Calu3 (cell line): ENCODE measurements at regions of chr12 and their contacts with region 1.

Region 1: DNA sequence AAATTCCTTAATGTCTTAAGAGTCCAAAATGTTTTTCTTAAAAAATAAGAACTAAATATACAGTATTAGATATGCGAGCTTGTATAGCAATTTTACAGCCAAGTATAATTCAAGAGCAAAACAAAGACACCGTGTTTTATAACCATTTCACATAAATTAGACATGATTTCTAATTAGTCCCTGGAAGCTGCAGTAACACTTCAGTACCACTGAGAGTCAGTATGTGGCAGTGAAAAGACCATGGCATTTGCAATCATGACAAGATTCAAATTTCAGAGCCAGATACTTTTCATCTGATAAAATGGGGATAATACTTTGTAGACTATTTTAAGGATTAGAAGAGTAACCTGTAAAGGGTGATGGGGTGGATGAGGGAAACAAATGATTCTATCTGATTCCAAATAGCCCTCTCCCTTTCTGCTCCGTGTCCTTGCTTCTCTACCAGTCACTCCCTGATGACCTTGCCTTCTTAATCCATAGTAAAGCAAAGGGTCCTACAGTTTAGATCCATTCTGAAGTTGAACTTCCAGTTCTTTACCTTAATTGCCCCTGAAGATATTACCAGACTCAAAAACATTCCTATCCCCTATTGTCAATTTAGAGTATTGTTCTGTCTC is 145.4 kb upstream of the ABCD2 start:
- DNase-seq: peak; percentile 3
- H3K4me3 Mint-ChIP-seq: no peak overlapping the region
- H3K27ac Mint-ChIP-seq: no peak overlapping the region
- H3K4me1 Mint-ChIP-seq: no peaks in the 10 kb centered on the region
- H3K27me3 Mint-ChIP-seq: no peaks in the 10 kb centered on the region
- CTCF ChIP-seq: peak; percentile 36

Region 2: GRCh38 chr12:39237004-39237403 is 528.0 kb before region 1 on chr12:
- CTCF ChIA-PET with region 1: no interaction called
- intact Hi-C with region 1: no loop called
- DNase-seq: no peak
- H3K4me3 Mint-ChIP-seq: no peak overlapping the region
- H3K27ac Mint-ChIP-seq: no peak overlapping the region
- H3K4me1 Mint-ChIP-seq: peaks cover 16% of the 10 kb centered on the region
- H3K27me3 Mint-ChIP-seq: no peaks in the 10 kb centered on the region
- CTCF ChIP-seq: no peak

Region 3: DNA sequence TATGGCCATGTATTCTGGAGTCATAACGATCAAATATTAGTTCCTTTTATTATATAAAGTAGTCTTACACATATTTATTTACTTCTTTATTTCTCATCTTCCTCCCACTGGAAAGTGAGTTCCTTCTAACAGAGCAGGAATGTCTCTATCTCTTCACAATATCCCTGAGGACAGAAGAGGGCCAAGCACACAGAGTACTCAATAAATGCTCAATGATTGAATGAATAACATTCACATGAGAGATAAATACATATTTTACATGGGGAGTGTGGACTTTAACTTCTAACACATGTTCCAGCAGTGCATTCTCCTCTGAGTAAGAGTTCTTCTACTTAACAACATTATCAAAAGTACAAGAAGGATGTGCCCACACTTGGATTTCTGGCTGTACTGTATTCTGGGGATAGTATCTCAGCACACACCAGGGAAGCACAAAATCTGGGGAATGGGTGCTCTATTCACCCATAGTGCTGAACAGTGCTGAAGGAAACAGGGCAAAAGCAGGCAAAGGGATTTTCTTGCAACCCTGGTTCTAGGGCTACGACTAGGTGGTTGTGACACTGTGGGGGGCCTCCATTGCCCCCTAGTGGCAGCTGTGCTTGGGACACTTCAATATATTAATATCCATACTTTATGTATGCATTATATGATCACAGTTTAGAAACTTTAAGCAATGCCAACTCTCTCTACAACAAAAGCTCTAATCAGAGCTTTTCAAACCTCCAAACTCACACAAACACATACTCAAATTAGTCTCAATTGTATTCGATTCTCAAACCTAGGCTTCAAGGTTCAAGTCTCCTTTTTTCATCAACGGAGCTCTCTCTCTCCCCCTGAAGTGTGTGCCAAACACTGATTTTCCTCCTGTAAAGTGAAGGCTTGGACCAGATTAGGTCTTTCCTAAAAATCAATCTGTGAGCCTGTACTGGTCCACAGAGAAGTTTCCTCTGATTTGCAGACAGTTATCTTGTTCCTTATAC is 225.4 kb after region 1 on chr12:
- CTCF ChIA-PET with region 1: interaction called, 4 read pairs
- intact Hi-C with region 1: loop called (anchors 1 kb)
- DNase-seq: peak; percentile 60
- H3K4me3 Mint-ChIP-seq: no peak overlapping the region
- H3K27ac Mint-ChIP-seq: no peak overlapping the region
- H3K4me1 Mint-ChIP-seq: peaks cover 9% of the 10 kb centered on the region
- H3K27me3 Mint-ChIP-seq: no peaks in the 10 kb centered on the region
- CTCF ChIP-seq: peak; percentile 64

Region 4: GRCh38 chr12:40312982-40313576 is 548.0 kb after region 1 on chr12:
- CTCF ChIA-PET with region 1: no interaction called
- intact Hi-C with region 1: loop called (anchors 5 kb)
- DNase-seq: peak; percentile 1
- H3K4me3 Mint-ChIP-seq: no peak overlapping the region
- H3K27ac Mint-ChIP-seq: no peak overlapping the region
- H3K4me1 Mint-ChIP-seq: no peaks in the 10 kb centered on the region
- H3K27me3 Mint-ChIP-seq: no peaks in the 10 kb centered on the region
- CTCF ChIP-seq: peak; percentile 11